CD4-positive, alpha-beta T cell (primary cell): ENCODE measurements at regions of chr6 and their contacts with region 1.

Region 1: GRCh38 chr6:42547407-42548329 is 16.2 kb upstream of the UBR2 start:
- DNase-seq: peak; percentile 72 to 91 (median 86)
- ATAC-seq: peak; percentile 98
- H3K4me3 ChIP-seq: peak overlapping the region; percentile 38
- H3K4me3 Mint-ChIP-seq: peak overlapping the region; percentile 66
- H3K27ac ChIP-seq: no peak overlapping the region
- H3K27ac Mint-ChIP-seq: peak overlapping the region; percentile 65
- H3K4me1 ChIP-seq: peaks cover 11% of the 10 kb centered on the region
- H3K4me1 Mint-ChIP-seq: peaks cover 12% of the 10 kb centered on the region
- H3K27me3 ChIP-seq: no peaks in the 10 kb centered on the region
- H3K27me3 Mint-ChIP-seq: peaks cover 13% of the 10 kb centered on the region
- CTCF ChIP-seq: peak; percentile 93

Region 2: GRCh38 chr6:41909727-41910126 is 637.9 kb before region 1 on chr6:
- CTCF ChIA-PET with region 1: no interaction called
- POLR2A ChIA-PET with region 1: no interaction called
- intact Hi-C with region 1: no loop called
- DNase-seq: no peak
- ATAC-seq: no peak
- H3K4me3 ChIP-seq: no peak overlapping the region
- H3K4me3 Mint-ChIP-seq: no peak overlapping the region
- H3K27ac ChIP-seq: no peak overlapping the region
- H3K27ac Mint-ChIP-seq: no peak overlapping the region
- H3K4me1 ChIP-seq: no peaks in the 10 kb centered on the region
- H3K4me1 Mint-ChIP-seq: peaks cover 6% of the 10 kb centered on the region
- H3K27me3 ChIP-seq: no peaks in the 10 kb centered on the region
- H3K27me3 Mint-ChIP-seq: no peaks in the 10 kb centered on the region
- CTCF ChIP-seq: no peak

Region 3: DNA sequence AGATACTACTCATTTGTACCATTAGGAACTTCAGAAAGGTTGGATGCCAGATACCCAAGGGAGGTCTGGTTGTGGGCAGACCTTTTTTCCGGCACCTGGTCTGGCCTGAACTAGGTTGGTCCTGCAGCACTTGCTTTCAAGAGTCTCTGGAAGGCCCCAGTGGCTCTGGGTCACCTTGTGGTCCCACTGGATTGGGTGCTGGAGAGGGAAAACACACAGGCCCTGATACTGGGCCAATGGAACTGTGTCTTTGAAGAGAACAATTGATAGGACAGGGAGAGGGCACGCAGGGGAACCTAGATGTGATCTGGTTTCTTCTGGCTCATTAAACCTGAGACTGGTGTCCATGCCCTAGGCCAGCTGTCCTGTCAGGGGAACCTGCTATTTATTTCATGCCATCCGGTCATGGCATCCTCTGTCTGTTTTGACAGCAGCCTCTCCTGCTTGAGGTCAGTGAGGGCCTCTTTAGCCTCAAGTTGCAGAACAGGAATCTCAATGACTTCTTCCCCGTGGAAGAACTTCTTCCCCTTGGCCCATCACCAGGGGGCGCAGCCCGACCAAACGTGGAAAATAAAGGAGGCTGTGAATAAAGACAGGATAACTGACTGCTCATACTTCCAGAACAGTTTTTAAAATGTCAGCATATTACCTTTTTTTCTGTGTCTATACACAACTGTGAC is 472.4 kb before region 1 on chr6:
- CTCF ChIA-PET with region 1: interaction called, 4 read pairs
- POLR2A ChIA-PET with region 1: no interaction called
- intact Hi-C with region 1: loop called (anchors 5 kb)
- DNase-seq: peak; percentile 21 to 69 (median 42)
- ATAC-seq: no peak
- H3K4me3 ChIP-seq: no peak overlapping the region
- H3K4me3 Mint-ChIP-seq: no peak overlapping the region
- H3K27ac ChIP-seq: no peak overlapping the region
- H3K27ac Mint-ChIP-seq: no peak overlapping the region
- H3K4me1 ChIP-seq: peaks cover 2% of the 10 kb centered on the region
- H3K4me1 Mint-ChIP-seq: peaks cover 6% of the 10 kb centered on the region
- H3K27me3 ChIP-seq: no peaks in the 10 kb centered on the region
- H3K27me3 Mint-ChIP-seq: no peaks in the 10 kb centered on the region
- CTCF ChIP-seq: peak; percentile 69

Region 4: GRCh38 chr6:42279144-42279781 is 268.4 kb before region 1 on chr6:
- CTCF ChIA-PET with region 1: interaction called, 13 read pairs
- POLR2A ChIA-PET with region 1: no interaction called
- intact Hi-C with region 1: no loop called
- DNase-seq: peak in 9 of 14 experiments; percentile 6 to 77 (median 22)
- ATAC-seq: peak; percentile 12
- H3K4me3 ChIP-seq: no peak overlapping the region
- H3K4me3 Mint-ChIP-seq: peak overlapping the region; percentile 48
- H3K27ac ChIP-seq: peak overlapping the region; percentile 0
- H3K27ac Mint-ChIP-seq: peak overlapping the region; percentile 70
- H3K4me1 ChIP-seq: peaks cover 46% of the 10 kb centered on the region
- H3K4me1 Mint-ChIP-seq: peaks cover 45% of the 10 kb centered on the region
- H3K27me3 ChIP-seq: no peaks in the 10 kb centered on the region
- H3K27me3 Mint-ChIP-seq: no peaks in the 10 kb centered on the region
- CTCF ChIP-seq: no peak

Region 5: GRCh38 chr6:42315991-42316378 is 231.7 kb before region 1 on chr6:
- CTCF ChIA-PET with region 1: interaction called, 5 read pairs
- POLR2A ChIA-PET with region 1: no interaction called
- intact Hi-C with region 1: loop called in 1 of 2 experiments (anchors 5 kb)
- DNase-seq: peak in 2 of 14 experiments; percentile 55 to 70
- ATAC-seq: no peak
- H3K4me3 ChIP-seq: no peak overlapping the region
- H3K4me3 Mint-ChIP-seq: no peak overlapping the region
- H3K27ac ChIP-seq: no peak overlapping the region
- H3K27ac Mint-ChIP-seq: peak overlapping the region; percentile 75
- H3K4me1 ChIP-seq: peaks cover 37% of the 10 kb centered on the region
- H3K4me1 Mint-ChIP-seq: peaks cover 60% of the 10 kb centered on the region
- H3K27me3 ChIP-seq: no peaks in the 10 kb centered on the region
- H3K27me3 Mint-ChIP-seq: no peaks in the 10 kb centered on the region
- CTCF ChIP-seq: no peak

Region 6: GRCh38 chr6:42453031-42453653 is 94.5 kb before region 1 on chr6:
- CTCF ChIA-PET with region 1: interaction called, 14 read pairs
- POLR2A ChIA-PET with region 1: interaction called, 15 read pairs
- intact Hi-C with region 1: no loop called
- DNase-seq: peak; percentile 57 to 90 (median 75)
- ATAC-seq: peak; percentile 72
- H3K4me3 ChIP-seq: peak overlapping the region; percentile 96
- H3K4me3 Mint-ChIP-seq: peak overlapping the region; percentile 98
- H3K27ac ChIP-seq: peak overlapping the region in 1 of 2 donors; percentile 64
- H3K27ac Mint-ChIP-seq: peak overlapping the region; percentile 86
- H3K4me1 ChIP-seq: peaks cover 36% of the 10 kb centered on the region
- H3K4me1 Mint-ChIP-seq: peaks cover 51% of the 10 kb centered on the region
- H3K27me3 ChIP-seq: no peaks in the 10 kb centered on the region
- H3K27me3 Mint-ChIP-seq: no peaks in the 10 kb centered on the region
- CTCF ChIP-seq: no peak

Region 7: DNA sequence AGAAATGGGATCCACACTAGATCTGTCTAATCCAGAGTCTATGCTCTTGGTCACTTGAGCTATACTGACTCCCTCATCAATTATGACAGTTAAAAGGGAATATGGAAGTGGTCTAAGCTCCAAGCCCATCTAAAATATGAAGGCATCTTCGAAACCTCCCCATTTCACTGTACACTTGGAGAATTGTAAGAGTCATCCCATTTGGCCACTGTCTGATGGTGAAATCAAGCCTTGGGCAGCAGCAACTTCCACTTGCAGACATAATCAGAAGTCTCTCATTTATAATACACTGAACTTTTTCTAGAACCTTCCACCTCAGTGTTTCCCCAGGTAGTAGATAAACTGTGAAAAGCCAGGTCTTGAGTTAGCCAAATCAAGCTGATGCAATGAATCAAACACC is 10.1 kb before region 1 on chr6:
- CTCF ChIA-PET with region 1: interaction called, 24 read pairs
- POLR2A ChIA-PET with region 1: no interaction called
- intact Hi-C with region 1: no loop called
- DNase-seq: no peak
- ATAC-seq: no peak
- H3K4me3 ChIP-seq: no peak overlapping the region
- H3K4me3 Mint-ChIP-seq: no peak overlapping the region
- H3K27ac ChIP-seq: no peak overlapping the region
- H3K27ac Mint-ChIP-seq: no peak overlapping the region
- H3K4me1 ChIP-seq: no peaks in the 10 kb centered on the region
- H3K4me1 Mint-ChIP-seq: no peaks in the 10 kb centered on the region
- H3K27me3 ChIP-seq: no peaks in the 10 kb centered on the region
- H3K27me3 Mint-ChIP-seq: no peaks in the 10 kb centered on the region
- CTCF ChIP-seq: no peak